A673 (cell line): ENCODE measurements at regions of chr9 and their contacts with region 1.

Region 1: GRCh38 chr9:75855509-75855908 is 35.0 kb upstream of the PCSK5 start:
- DNase-seq: peak; percentile 33
- H3K4me3 ChIP-seq: no peak overlapping the region
- H3K27ac ChIP-seq: no peak overlapping the region
- H3K4me1 ChIP-seq: no peaks in the 10 kb centered on the region
- H3K27me3 ChIP-seq: no peaks in the 10 kb centered on the region
- CTCF ChIP-seq: peak; percentile 58

Region 2: GRCh38 chr9:75265525-75265972 is 590.0 kb before region 1 on chr9:
- CTCF ChIA-PET with region 1: no interaction called
- POLR2A ChIA-PET with region 1: no interaction called
- intact Hi-C with region 1: loop called (anchors 5 kb)
- DNase-seq: peak; percentile 67
- H3K4me3 ChIP-seq: no peak overlapping the region
- H3K27ac ChIP-seq: no peak overlapping the region
- H3K4me1 ChIP-seq: no peaks in the 10 kb centered on the region
- H3K27me3 ChIP-seq: no peaks in the 10 kb centered on the region
- CTCF ChIP-seq: peak; percentile 89

Region 3: DNA sequence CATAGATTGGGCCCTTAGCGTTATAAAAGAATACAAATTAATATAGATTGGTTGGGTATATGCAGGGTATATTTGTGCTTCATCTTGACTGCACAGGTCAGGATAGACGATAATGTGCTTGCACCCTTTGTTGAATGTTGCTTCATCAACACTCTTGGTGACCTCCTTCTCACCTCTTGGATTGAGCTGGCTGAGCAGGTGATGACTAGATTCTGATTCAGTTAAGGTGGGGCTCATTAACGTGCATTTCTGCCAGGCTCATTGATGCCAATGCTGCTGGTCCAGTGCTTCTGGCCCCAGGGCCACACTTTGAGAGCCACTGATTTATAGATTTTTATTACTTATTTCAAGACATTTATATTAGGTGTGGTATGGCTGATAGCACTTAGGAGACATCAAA is 62.6 kb after region 1 on chr9:
- CTCF ChIA-PET with region 1: no interaction called
- POLR2A ChIA-PET with region 1: no interaction called
- intact Hi-C with region 1: no loop called
- DNase-seq: no peak
- H3K4me3 ChIP-seq: no peak overlapping the region
- H3K27ac ChIP-seq: no peak overlapping the region
- H3K4me1 ChIP-seq: no peaks in the 10 kb centered on the region
- H3K27me3 ChIP-seq: peaks cover 23% of the 10 kb centered on the region
- CTCF ChIP-seq: no peak

Region 4: DNA sequence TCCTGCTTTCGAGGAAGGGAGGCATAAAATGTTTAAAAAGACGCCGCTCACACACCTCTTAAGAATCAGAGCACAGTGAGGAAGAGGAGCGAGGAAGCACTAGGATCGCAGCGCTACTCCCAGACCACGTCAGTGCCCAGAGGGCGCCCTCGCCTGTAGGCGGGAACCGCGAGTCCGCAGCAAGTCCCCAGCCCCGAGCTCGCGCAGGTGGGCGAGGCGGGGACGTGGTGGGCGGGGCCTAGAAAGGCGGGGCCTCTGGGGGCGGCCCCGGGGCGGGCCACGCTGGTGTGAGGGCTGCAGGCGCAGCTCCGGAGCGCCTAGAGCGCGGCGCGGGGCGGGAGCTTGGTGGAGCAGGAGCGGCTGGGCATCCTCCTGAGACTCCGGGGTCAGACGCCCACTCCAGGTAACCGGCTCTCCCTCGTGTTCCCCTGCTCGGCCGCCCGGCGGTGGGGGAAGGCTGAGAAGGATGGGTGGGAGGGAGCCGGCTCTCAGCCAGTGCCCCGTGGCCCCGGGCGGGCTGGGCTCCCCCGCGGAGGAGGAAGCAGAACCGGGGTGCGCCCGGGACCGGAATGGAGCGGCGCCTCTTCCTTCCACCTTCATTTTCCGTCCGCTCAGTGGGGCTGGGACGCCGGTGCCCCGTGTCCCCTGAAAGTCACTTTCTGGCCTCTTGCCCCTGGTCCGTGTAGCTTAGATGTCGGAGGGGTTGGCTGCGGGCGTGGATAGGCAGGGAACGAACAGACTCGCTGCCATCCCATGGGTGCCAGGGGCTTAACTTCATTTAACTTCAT is 603.6 kb after region 1 on chr9 and contains the start of gene GCNT1:
- CTCF ChIA-PET with region 1: no interaction called
- POLR2A ChIA-PET with region 1: no interaction called
- intact Hi-C with region 1: no loop called
- DNase-seq: peak; percentile 60
- H3K4me3 ChIP-seq: peak within 1 kb of the TSS; percentile 40
- H3K27ac ChIP-seq: no peak within 1 kb of the TSS
- H3K4me1 ChIP-seq: peaks cover 4% of the 10 kb centered on the region
- H3K27me3 ChIP-seq: peaks cover 36% of the 10 kb centered on the region
- CTCF ChIP-seq: peak; percentile 31; the same call in 1 of the 2 replicates
- total RNA-seq, gene GCNT1: not detected in 2 replicates